Activated CD8-positive, alpha-beta T cell treated with anti-CD3 and anti-CD28 coated beads, Interleukin-2, amount 10 ng/mL, durations not matched to agents 7 days and 5 days (primary cell): ENCODE measurements at regions of chr1 and their contacts with region 1.

Region 1: GRCh38 chr1:235597867-235598553 is 51.6 kb downstream of the GNG4 start:
- DNase-seq: no peak
- ATAC-seq: no peak
- H3K4me3 Mint-ChIP-seq: no peak overlapping the region
- H3K27ac Mint-ChIP-seq: no peak overlapping the region
- H3K4me1 Mint-ChIP-seq: peaks cover 10% of the 10 kb centered on the region
- H3K27me3 Mint-ChIP-seq: peaks cover 8% of the 10 kb centered on the region

Region 2: GRCh38 chr1:235504496-235505222 is 93.4 kb before region 1 on chr1:
- CTCF ChIA-PET with region 1: interaction called, 16 read pairs
- POLR2A ChIA-PET with region 1: no interaction called
- DNase-seq: peak; percentile 99
- ATAC-seq: peak; percentile 86
- H3K4me3 Mint-ChIP-seq: peak overlapping the region; percentile 90
- H3K27ac Mint-ChIP-seq: peak overlapping the region; percentile 97
- H3K4me1 Mint-ChIP-seq: peaks cover 19% of the 10 kb centered on the region
- H3K27me3 Mint-ChIP-seq: peaks cover 3% of the 10 kb centered on the region

Region 3: DNA sequence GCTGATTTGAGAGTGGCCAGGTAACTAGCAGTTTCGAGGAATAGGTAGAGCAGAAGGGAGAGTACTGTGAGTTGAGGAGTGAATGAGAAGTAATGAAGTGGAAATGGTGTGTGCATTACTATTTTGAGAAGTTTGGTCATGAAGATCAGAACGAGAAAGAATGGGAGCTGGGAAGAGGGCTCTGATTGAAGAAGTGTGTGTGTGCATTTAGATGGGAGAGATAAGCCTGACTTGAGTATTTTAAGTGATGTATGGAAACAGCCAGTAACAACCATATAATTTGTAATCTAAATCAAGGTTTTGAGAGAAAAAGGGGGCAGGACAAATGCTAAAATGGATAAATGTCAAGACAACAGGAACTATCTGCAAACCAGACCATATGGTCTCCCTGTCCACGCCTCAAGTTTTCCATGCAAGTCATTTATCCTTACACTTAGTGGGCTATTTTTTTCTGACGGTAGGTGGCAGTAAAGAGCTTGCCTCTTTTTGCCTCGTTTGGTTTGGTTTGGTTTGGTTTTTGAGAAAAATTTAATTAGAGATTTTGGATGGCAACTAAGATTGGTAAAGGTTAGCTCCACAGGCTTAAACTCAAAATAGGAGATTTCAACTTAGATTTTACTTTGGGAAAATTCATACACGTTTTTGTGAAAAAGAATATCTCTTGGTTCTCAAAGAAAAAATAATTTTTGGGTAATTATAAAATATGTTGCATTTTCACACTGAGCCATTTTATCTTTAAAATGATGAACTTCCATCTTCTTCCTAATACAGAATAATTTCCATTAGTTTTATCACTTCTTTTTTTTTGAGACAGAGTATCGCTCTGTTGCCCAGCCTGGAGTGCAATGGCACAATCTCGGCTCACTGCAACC is 84.3 kb before region 1 on chr1:
- CTCF ChIA-PET with region 1: interaction called, 13 read pairs
- POLR2A ChIA-PET with region 1: no interaction called
- DNase-seq: peak; percentile 62
- ATAC-seq: peak; percentile 71
- H3K4me3 Mint-ChIP-seq: no peak overlapping the region
- H3K27ac Mint-ChIP-seq: no peak overlapping the region
- H3K4me1 Mint-ChIP-seq: no peaks in the 10 kb centered on the region
- H3K27me3 Mint-ChIP-seq: peaks cover 21% of the 10 kb centered on the region

Region 4: DNA sequence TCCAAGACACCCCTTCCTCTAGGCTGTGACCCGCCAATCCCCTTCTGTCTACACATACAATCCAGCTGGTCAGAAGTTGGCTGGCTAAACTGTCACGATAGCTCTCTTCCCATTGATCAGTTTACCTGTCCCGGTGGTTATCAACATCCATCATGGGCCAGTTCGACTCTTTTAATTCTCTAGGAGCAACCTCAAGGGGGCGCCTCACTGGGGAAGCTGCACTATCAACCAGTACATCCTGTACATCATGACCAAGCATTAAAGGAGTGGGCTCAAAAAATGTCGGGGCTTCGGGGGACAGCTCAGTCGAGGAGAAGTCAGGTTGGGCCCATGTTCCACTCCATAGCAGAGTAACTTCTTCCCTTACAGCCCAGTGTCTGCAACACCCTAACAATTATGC is 40.5 kb before region 1 on chr1:
- CTCF ChIA-PET with region 1: interaction called, 12 read pairs
- POLR2A ChIA-PET with region 1: no interaction called
- DNase-seq: peak; percentile 38
- ATAC-seq: peak; percentile 44
- H3K4me3 Mint-ChIP-seq: no peak overlapping the region
- H3K27ac Mint-ChIP-seq: no peak overlapping the region
- H3K4me1 Mint-ChIP-seq: no peaks in the 10 kb centered on the region
- H3K27me3 Mint-ChIP-seq: peaks cover 2% of the 10 kb centered on the region

Region 5: GRCh38 chr1:235614442-235614954 is 16.5 kb after region 1 on chr1:
- CTCF ChIA-PET with region 1: interaction called, 14 read pairs
- POLR2A ChIA-PET with region 1: no interaction called
- DNase-seq: no peak
- ATAC-seq: no peak
- H3K4me3 Mint-ChIP-seq: no peak overlapping the region
- H3K27ac Mint-ChIP-seq: no peak overlapping the region
- H3K4me1 Mint-ChIP-seq: no peaks in the 10 kb centered on the region
- H3K27me3 Mint-ChIP-seq: peaks cover 4% of the 10 kb centered on the region